MCF 10A (cell line): ENCODE measurements at regions of chr3 and their contacts with region 1.

Region 1: DNA sequence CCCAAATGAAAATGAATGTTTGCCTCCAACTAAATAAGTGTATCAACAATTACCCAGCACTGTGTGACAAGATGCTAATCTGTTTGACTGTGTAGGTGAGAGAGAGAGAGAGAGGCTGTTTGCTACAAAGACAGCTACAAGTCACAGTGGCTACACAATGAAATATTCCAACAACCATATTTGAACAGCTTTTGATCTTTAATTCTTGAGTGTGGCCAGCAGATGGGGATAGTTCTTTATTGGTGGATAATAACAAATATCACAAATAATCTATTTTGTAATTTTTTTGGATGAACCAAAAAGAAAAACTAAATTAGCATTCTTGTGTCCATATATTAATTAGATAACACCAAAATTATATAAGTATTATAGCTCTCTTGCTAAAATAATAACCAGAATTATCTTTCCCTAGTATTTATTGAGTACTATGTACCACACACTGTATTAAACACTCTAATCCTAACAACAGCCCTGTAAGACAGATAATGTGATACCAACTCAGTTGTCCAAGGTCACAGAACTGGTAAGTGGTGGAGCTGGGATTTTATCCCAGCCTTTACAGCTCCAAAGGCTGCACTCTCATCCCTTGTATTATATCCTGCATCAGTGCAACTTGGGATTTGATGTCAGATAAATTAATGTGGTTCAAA is 61.9 kb upstream of the C3orf80 start:
- DNase-seq: peak; percentile 37
- H3K4me3 Mint-ChIP-seq: no peak overlapping the region
- H3K27ac Mint-ChIP-seq: no peak overlapping the region
- H3K4me1 Mint-ChIP-seq: peaks cover 4% of the 10 kb centered on the region
- H3K27me3 Mint-ChIP-seq: no peaks in the 10 kb centered on the region
- CTCF ChIP-seq: peak; percentile 39

Region 2: GRCh38 chr3:159872374-159873109 is 290.8 kb before region 1 on chr3:
- CTCF ChIA-PET with region 1: no interaction called
- POLR2A ChIA-PET with region 1: no interaction called
- intact Hi-C with region 1: no loop called
- DNase-seq: peak; percentile 89
- H3K4me3 Mint-ChIP-seq: no peak overlapping the region
- H3K27ac Mint-ChIP-seq: peak overlapping the region; percentile 84
- H3K4me1 Mint-ChIP-seq: peaks cover 22% of the 10 kb centered on the region
- H3K27me3 Mint-ChIP-seq: no peaks in the 10 kb centered on the region
- CTCF ChIP-seq: peak; percentile 12

Region 3: DNA sequence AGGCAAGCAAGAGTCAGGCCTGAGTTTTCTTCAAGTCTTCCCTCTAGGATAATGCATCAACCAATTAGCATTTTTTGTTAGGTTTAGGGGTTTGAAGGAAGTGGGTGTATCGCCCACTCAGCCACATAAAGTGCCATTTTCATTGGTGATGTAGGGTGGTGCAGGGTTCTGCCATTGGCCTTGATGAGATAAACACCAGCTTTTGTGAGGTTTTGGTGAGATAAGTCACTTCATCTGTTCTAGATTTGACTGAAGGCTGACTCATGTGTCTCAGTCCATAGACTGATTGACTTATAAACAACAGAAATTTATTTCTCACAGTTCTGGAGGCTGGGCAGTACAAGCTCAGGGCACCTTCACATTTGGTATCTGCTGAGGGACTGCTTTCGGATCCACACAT is 22.6 kb before region 1 on chr3:
- CTCF ChIA-PET with region 1: interaction called, 12 read pairs
- POLR2A ChIA-PET with region 1: no interaction called
- intact Hi-C with region 1: no loop called
- DNase-seq: no peak
- H3K4me3 Mint-ChIP-seq: no peak overlapping the region
- H3K27ac Mint-ChIP-seq: no peak overlapping the region
- H3K4me1 Mint-ChIP-seq: peaks cover 4% of the 10 kb centered on the region
- H3K27me3 Mint-ChIP-seq: no peaks in the 10 kb centered on the region
- CTCF ChIP-seq: no peak

Region 4: DNA sequence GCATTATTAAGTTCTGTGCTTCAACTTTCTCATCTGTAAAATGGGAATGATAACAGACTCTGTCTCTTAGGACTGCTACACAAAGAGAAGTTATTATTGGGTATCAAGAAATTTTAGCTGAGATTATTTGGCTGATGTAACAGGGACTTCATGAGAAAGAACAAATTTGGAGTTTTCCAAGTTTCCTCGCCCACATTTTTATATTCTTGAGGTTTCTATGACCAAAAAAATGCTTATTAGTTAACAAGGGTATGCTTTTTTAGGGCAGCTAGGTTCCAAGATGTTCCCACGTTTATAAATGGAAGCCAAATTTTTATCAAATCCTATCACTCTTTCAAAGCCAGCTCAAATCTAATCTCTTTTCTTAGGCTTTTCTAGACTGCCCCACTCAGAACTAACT is 11.3 kb after region 1 on chr3:
- CTCF ChIA-PET with region 1: interaction called, 13 read pairs
- POLR2A ChIA-PET with region 1: no interaction called
- intact Hi-C with region 1: no loop called
- DNase-seq: no peak
- H3K4me3 Mint-ChIP-seq: no peak overlapping the region
- H3K27ac Mint-ChIP-seq: no peak overlapping the region
- H3K4me1 Mint-ChIP-seq: peaks cover 1% of the 10 kb centered on the region
- H3K27me3 Mint-ChIP-seq: no peaks in the 10 kb centered on the region
- CTCF ChIP-seq: no peak

Region 5: DNA sequence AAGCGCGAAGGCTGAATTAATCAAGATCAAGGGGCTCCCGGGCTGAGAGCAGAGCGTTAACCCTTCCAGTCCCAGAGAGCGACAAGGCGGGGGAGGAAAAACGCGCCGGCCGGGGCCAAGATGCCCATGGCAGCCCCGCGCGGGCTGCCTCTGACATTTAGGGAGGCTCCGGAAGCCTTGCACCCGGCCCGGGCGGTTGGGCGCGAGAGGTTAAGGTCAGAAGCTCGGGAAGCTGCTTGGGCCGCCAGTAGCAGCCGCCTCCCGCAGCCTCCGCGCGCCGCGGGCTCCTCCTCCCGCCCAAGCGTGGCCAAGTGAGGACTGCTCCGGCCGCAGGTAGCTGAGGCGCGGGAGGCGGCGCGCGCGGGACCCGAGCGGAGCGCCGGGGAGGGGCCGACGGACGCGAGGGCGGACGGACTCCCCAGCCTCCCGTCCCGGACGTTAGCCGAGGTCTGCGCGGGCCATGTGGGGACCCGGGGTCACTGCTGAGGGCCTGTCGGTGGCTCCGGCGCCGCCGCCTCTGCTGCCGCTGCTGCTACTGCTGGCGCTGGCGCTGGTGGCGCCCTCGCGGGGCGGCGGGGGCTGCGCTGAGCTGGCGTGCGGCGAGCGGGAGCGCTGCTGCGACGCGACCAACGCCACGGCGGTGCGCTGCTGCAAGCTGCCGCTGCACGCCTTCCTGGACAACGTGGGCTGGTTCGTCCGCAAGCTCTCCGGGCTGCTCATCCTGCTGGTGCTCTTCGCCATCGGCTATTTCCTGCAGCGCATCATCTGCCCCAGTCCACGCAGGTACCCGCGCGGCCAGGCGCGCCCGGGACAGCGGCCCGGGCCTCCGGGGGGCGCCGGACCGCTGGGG is 62.0 kb after region 1 on chr3 and contains the start of gene C3orf80:
- CTCF ChIA-PET with region 1: interaction called, 14 read pairs
- POLR2A ChIA-PET with region 1: no interaction called
- intact Hi-C with region 1: no loop called
- DNase-seq: peak; percentile 56
- H3K4me3 Mint-ChIP-seq: peak within 1 kb of the TSS; percentile 65
- H3K27ac Mint-ChIP-seq: no peak within 1 kb of the TSS
- H3K4me1 Mint-ChIP-seq: no peaks in the 10 kb centered on the region
- H3K27me3 Mint-ChIP-seq: no peaks in the 10 kb centered on the region
- CTCF ChIP-seq: no peak
- total RNA-seq, gene C3orf80: 0.28 and 0.29 TPM in 2 replicates

Region 6: DNA sequence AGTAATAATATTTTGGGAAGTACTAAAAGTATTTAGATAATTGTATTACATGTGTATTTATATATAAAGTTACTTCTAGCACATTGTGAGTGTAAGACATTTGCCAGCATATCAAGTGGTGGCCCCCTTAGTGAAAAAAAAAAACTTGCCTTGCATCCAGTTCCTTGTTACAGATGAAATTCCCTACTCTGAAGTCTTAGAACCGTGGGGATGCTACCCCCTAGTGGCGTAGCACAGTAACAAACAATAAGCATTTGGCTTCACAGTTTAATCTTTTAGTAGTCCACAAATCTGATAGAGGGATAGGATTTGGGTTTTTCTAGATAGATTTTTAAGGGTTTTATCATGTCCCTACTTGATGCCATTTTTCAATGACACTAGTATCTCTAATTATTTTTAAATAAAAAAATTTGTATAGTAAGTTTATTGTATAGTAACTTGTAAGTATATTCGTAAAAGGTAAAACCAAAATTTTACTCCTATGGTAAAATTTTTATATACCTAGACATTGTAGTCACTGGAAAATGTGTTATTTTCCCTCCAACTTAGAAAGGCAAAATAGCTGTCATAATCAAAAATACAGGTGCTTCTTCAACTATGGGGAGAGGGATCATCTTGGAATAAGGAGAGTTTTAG is 250.4 kb after region 1 on chr3:
- CTCF ChIA-PET with region 1: interaction called, 53 read pairs
- POLR2A ChIA-PET with region 1: interaction called, 3 read pairs
- intact Hi-C with region 1: loop called (anchors 1 kb)
- DNase-seq: peak; percentile 79
- H3K4me3 Mint-ChIP-seq: no peak overlapping the region
- H3K27ac Mint-ChIP-seq: no peak overlapping the region
- H3K4me1 Mint-ChIP-seq: peaks cover 18% of the 10 kb centered on the region
- H3K27me3 Mint-ChIP-seq: no peaks in the 10 kb centered on the region
- CTCF ChIP-seq: peak; percentile 78